ENCODE measurements at regions of chr9 and their contacts with region 1.

Region 1: DNA sequence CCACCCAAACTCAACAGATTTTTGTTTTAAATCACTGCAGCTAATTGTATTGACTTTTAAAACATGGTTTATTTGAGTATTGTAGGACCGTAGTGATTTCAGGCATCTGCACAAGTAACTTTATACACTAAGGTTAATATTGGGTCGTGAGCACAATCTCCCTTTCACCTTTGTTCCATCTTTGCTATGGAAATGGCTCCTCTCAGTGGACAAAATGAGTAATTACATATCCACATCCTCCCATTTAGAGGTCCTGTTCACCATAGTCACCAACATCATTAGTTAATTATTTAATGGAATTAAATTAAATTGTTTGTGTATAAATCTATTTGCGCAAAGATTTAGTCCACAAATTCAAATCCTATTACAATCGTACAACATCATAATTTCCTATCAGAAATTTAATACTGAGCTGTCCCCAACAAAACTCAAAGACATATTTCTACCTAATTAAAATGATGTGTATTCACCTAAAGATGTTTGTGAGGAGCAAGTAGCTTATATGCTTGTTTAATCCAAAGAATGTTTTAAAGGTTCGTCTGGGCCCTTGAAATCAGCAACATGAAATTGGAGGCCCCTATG is 173.0 kb upstream of the DAPK1 start:
- DNase-seq: peak; percentile 34 to 49 (median 39)
- H3K4me3 ChIP-seq: no peak overlapping the region
- H3K4me3 Mint-ChIP-seq: no peak overlapping the region
- H3K27ac ChIP-seq: no peak overlapping the region
- H3K27ac Mint-ChIP-seq: no peak overlapping the region
- H3K4me1 ChIP-seq: peaks cover 7% of the 10 kb centered on the region in 2 donors
- H3K4me1 Mint-ChIP-seq: peaks cover 14% of the 10 kb centered on the region
- H3K27me3 ChIP-seq: no peaks in the 10 kb centered on the region
- H3K27me3 Mint-ChIP-seq: peaks cover 2 to 21% (median 3%) of the 10 kb centered on the region in 3 donors
- CTCF ChIP-seq: peak; percentile 94

Region 2: DNA sequence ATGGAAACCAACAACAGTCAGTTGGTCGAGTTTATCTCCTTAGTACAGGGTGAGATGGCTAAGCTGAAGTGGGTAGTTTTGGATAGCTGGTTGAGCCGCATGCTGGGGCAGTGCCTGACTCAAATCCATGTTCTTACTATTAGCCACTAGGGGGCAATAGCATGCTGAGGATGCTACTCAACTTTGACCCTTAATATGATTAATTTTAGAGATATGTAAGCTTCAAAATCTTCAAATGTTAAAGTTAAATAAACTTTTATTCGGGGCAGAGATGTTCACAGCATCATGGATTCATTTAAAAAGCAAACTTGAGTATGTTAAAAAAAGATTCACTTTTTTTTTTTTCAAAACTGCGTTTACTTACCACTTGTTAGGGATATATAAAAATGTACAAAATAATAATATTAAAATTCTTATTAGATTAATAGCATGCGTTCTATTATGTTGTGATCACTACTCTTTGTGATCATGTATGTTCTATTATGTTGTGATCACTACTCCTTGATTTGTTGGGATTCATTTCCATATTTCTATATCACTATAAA is 1122.3 kb before region 1 on chr9:
- intact Hi-C with region 1: loop called in 1 of 2 experiments (anchors 5 kb)
- DNase-seq: peak; percentile 15 to 49 (median 40)
- H3K4me3 ChIP-seq: no peak overlapping the region
- H3K4me3 Mint-ChIP-seq: no peak overlapping the region
- H3K27ac ChIP-seq: no peak overlapping the region
- H3K27ac Mint-ChIP-seq: no peak overlapping the region
- H3K4me1 ChIP-seq: no peaks in the 10 kb centered on the region
- H3K4me1 Mint-ChIP-seq: peaks cover 4% of the 10 kb centered on the region
- H3K27me3 ChIP-seq: no peaks in the 10 kb centered on the region
- H3K27me3 Mint-ChIP-seq: peaks cover 0 to 7% (median 2%) of the 10 kb centered on the region in 3 donors
- CTCF ChIP-seq: peak; percentile 90

Region 3: GRCh38 chr9:86434039-86434726 is 890.5 kb before region 1 on chr9:
- intact Hi-C with region 1: loop called (anchors 2 kb)
- DNase-seq: peak; percentile 17 to 29 (median 25)
- H3K4me3 ChIP-seq: no peak overlapping the region
- H3K4me3 Mint-ChIP-seq: no peak overlapping the region
- H3K27ac ChIP-seq: no peak overlapping the region
- H3K27ac Mint-ChIP-seq: no peak overlapping the region
- H3K4me1 ChIP-seq: no peaks in the 10 kb centered on the region
- H3K4me1 Mint-ChIP-seq: no peaks in the 10 kb centered on the region
- H3K27me3 ChIP-seq: no peaks in the 10 kb centered on the region
- H3K27me3 Mint-ChIP-seq: peaks cover 0 to 3% (median 2%) of the 10 kb centered on the region in 3 donors
- CTCF ChIP-seq: peak; percentile 71

Region 4: GRCh38 chr9:86486891-86487837 is 837.5 kb before region 1 on chr9:
- intact Hi-C with region 1: loop called (anchors 5 kb)
- DNase-seq: peak; percentile 11 to 33 (median 30)
- H3K4me3 ChIP-seq: no peak overlapping the region
- H3K4me3 Mint-ChIP-seq: no peak overlapping the region
- H3K27ac ChIP-seq: no peak overlapping the region
- H3K27ac Mint-ChIP-seq: peak overlapping the region in 3 of 7 donors; percentile 5 to 53 (median 28)
- H3K4me1 ChIP-seq: peaks cover 14 to 17% of the 10 kb centered on the region in 2 donors
- H3K4me1 Mint-ChIP-seq: peaks cover 14% of the 10 kb centered on the region
- H3K27me3 ChIP-seq: peaks cover 0 to 4% of the 10 kb centered on the region in 2 donors
- H3K27me3 Mint-ChIP-seq: peaks cover 0 to 4% (median 2%) of the 10 kb centered on the region in 3 donors
- CTCF ChIP-seq: peak; percentile 65

Region 5: DNA sequence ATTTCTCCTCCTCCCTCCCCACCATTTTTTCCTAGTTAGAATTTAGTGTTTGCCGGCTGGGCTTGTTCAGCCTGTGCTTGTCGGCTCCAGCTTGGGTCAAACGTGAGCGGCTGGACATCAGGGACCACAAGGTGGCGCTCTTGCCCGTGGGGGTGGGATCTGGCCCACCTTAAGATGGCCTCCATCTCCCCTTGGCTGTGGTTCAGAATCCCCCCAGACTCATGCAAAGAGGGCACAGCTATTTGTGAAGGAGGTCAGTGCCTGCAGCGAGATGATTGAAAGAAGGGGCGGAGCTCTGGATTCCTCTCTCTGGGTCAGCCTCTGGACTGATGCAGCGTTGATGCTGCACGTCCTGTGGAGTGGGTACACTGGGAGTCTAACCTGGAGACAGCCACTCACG is 687.2 kb before region 1 on chr9:
- intact Hi-C with region 1: loop called (anchors 5 to 10 kb)
- DNase-seq: peak in 1 of 3 donors; percentile 12
- H3K4me3 ChIP-seq: no peak overlapping the region
- H3K4me3 Mint-ChIP-seq: peak overlapping the region in 1 of 2 donors; percentile 58
- H3K27ac ChIP-seq: no peak overlapping the region
- H3K27ac Mint-ChIP-seq: peak overlapping the region in 1 of 7 donors; percentile 47
- H3K4me1 ChIP-seq: no peaks in the 10 kb centered on the region
- H3K4me1 Mint-ChIP-seq: no peaks in the 10 kb centered on the region
- H3K27me3 ChIP-seq: peaks cover 0 to 9% of the 10 kb centered on the region in 2 donors
- H3K27me3 Mint-ChIP-seq: peaks cover 0 to 13% (median 8%) of the 10 kb centered on the region in 3 donors
- CTCF ChIP-seq: peak; percentile 63

Region 6: DNA sequence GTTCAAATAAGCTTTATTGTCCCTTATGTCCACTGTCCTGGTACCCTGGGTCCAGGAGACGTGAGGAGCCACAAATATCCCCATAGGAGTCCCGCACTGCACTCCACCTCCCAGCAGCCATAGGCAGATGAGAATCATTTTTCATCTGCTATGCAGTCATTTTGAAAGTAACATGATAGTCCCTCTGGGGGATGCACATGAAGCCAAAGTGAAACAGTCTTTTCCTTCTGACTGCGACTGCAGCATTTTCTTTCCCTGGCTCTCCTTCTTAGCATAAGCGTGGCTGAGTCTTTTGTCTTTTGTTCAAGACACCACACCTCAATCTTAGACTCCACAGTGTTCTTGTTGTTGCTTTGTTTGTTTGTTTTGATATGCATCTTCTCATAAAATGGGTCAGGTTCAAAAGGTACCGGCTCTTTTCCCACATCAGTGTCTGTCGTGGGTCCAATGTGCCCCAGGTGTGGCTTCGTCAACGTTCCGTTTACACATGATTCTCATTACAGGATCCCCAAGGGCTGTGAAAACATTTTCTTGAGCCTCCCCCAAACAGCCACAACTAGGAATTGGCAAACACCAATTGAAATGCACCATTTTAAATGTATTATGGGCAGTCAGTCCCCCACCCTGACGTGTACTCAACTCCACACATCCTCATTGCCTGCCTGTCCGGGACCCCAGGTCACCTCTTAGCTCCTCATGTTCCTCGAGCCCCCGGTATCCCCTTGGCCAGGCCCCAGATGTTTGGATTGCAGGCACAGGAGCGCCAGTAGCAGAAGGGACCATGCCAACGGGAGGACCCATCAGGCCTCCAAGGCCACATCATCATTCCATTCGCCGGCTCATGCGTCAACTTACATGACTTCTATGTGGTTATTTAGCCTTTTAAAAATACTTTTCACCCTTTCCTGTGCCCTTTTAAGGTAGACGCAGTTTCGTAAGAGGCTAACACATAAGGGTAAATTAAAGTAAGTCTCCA is 64.9 kb before region 1 on chr9:
- intact Hi-C with region 1: no loop called
- DNase-seq: no peak
- H3K4me3 ChIP-seq: no peak overlapping the region
- H3K4me3 Mint-ChIP-seq: no peak overlapping the region
- H3K27ac ChIP-seq: no peak overlapping the region
- H3K27ac Mint-ChIP-seq: no peak overlapping the region
- H3K4me1 ChIP-seq: no peaks in the 10 kb centered on the region
- H3K4me1 Mint-ChIP-seq: no peaks in the 10 kb centered on the region
- H3K27me3 ChIP-seq: no peaks in the 10 kb centered on the region
- H3K27me3 Mint-ChIP-seq: peaks cover 2 to 3% (median 2%) of the 10 kb centered on the region in 3 donors
- CTCF ChIP-seq: no peak